ENCODE measurements at regions of chr19 and their contacts with region 1.

Region 1: GRCh38 chr19:51158474-51159129 is 16.5 kb downstream of the SIGLEC7 start:
- DNase-seq: peak; percentile 90
- ATAC-seq: peak; percentile 86
- H3K4me3 Mint-ChIP-seq: no peak overlapping the region
- H3K27ac Mint-ChIP-seq: no peak overlapping the region
- H3K4me1 Mint-ChIP-seq: peaks cover 5% of the 10 kb centered on the region
- H3K27me3 Mint-ChIP-seq: no peaks in the 10 kb centered on the region

Region 2: DNA sequence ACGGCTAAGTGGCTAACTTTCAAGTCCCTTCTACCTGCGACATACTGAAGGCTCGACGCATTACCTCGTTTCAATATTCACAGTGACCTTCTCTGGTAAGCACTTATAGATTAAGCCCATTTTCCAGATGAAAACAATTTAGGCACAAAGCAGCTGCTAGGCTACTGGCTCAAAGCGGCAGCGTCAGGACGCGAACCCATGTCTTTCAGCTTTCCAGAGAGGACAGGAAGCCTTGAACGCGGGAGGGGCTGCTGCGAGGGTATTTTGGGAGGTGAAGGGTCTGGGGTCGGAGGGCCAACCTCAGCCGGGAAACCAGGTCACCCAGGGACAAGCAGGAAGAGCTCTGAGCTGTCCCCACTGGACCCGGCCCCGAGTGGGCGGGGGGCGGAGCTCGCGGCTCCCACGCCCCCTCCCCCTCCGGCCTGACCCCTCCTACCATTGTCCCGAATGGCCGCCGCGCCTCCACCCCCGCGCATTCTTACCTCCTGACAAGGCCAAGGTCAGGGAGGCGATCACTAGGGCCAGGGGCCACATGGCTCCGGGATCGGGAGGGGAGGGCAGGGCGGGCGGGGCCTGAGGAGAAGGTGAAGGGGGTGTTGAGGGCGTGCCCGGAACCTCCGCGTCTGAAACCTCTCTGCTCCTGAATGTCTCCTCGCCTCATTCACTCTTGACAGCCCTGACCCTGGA is 93.9 kb before region 1 on chr19 and contains the start of gene KLK13:
- CTCF ChIA-PET with region 1: no interaction called
- POLR2A ChIA-PET with region 1: no interaction called
- intact Hi-C with region 1: no loop called
- DNase-seq: peak; percentile 10
- ATAC-seq: no peak
- H3K4me3 Mint-ChIP-seq: no peak within 1 kb of the TSS
- H3K27ac Mint-ChIP-seq: no peak within 1 kb of the TSS
- H3K4me1 Mint-ChIP-seq: no peaks in the 10 kb centered on the region
- H3K27me3 Mint-ChIP-seq: peaks cover 40% of the 10 kb centered on the region
- total RNA-seq, gene KLK13: not detected

Region 3: DNA sequence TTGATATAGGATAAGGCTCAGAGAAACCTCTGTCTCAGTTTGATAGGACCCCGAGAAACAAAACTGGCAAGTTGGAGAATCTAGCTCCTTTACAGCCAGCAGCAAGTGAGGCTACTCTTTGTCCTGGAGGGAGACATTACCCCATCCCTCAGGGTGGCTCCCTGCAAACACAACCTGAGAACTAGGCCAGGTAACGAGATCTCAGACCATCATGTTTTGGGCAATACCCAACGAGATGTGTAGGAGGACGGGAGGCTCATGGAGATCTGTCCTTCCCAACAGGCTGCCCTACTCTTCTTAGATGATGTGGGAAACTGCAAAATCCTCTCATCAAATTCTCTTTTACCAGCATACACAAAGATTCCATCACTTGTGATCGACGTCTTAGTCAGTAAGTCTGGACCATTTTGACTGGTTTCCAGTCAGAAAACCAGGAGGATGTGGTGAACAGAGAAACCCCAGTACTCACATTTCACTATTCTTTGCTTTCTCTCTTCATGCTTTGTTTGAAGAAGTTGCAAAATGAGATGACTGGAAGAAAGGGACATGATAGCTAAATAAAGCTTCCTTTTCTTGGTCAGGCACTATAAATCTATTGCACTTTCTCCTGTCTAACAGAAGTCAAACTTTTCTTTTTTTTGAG is 44.4 kb before region 1 on chr19:
- CTCF ChIA-PET with region 1: interaction called, 3 read pairs
- POLR2A ChIA-PET with region 1: no interaction called
- intact Hi-C with region 1: loop called in 1 of 2 experiments (anchors 2 kb)
- DNase-seq: peak; percentile 42
- ATAC-seq: peak; percentile 86
- H3K4me3 Mint-ChIP-seq: no peak overlapping the region
- H3K27ac Mint-ChIP-seq: peak overlapping the region; percentile 90
- H3K4me1 Mint-ChIP-seq: peaks cover 7% of the 10 kb centered on the region
- H3K27me3 Mint-ChIP-seq: no peaks in the 10 kb centered on the region

Region 4: DNA sequence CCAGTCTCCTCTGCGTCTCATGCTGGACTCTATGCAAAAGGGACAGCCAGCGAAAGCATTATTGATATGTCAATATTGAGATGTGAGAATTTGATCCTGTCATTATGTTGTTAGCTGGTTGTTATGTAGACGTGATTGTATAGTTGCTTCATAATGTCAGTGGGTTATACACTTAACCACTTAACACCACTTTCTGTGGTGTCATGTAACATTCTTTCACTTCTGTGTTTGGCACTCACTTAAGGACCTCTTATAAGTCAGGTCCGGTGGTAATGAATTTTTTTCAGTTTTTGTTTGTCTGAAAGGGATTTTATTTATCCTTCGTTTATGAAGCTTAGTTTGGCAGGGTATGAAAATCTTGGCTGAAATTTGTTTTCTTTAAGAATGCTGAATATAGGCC is 23.6 kb before region 1 on chr19:
- CTCF ChIA-PET with region 1: interaction called, 10 read pairs
- POLR2A ChIA-PET with region 1: no interaction called
- intact Hi-C with region 1: no loop called
- DNase-seq: no peak
- ATAC-seq: no peak
- H3K4me3 Mint-ChIP-seq: no peak overlapping the region
- H3K27ac Mint-ChIP-seq: no peak overlapping the region
- H3K4me1 Mint-ChIP-seq: peaks cover 39% of the 10 kb centered on the region
- H3K27me3 Mint-ChIP-seq: no peaks in the 10 kb centered on the region

Region 5: GRCh38 chr19:51147663-51148062 is 10.9 kb before region 1 on chr19:
- CTCF ChIA-PET with region 1: interaction called, 15 read pairs
- POLR2A ChIA-PET with region 1: no interaction called
- intact Hi-C with region 1: no loop called
- DNase-seq: no peak
- ATAC-seq: no peak
- H3K4me3 Mint-ChIP-seq: no peak overlapping the region
- H3K27ac Mint-ChIP-seq: no peak overlapping the region
- H3K4me1 Mint-ChIP-seq: no peaks in the 10 kb centered on the region
- H3K27me3 Mint-ChIP-seq: no peaks in the 10 kb centered on the region

Region 6: GRCh38 chr19:51259348-51260245 is 101.0 kb after region 1 on chr19:
- CTCF ChIA-PET with region 1: interaction called, 43 read pairs
- POLR2A ChIA-PET with region 1: interaction called, 3 read pairs
- intact Hi-C with region 1: loop called (anchors 1 kb)
- DNase-seq: peak; percentile 66
- ATAC-seq: no peak
- H3K4me3 Mint-ChIP-seq: no peak overlapping the region
- H3K27ac Mint-ChIP-seq: no peak overlapping the region
- H3K4me1 Mint-ChIP-seq: peaks cover 5% of the 10 kb centered on the region
- H3K27me3 Mint-ChIP-seq: peaks cover 26% of the 10 kb centered on the region

Region 7: GRCh38 chr19:51327066-51328001 is 168.7 kb after region 1 on chr19:
- CTCF ChIA-PET with region 1: interaction called, 3 read pairs
- POLR2A ChIA-PET with region 1: no interaction called
- intact Hi-C with region 1: loop called in 1 of 2 experiments (anchors 2 kb)
- DNase-seq: peak; percentile 87
- ATAC-seq: peak; percentile 93
- H3K4me3 Mint-ChIP-seq: peak overlapping the region; percentile 35
- H3K27ac Mint-ChIP-seq: no peak overlapping the region
- H3K4me1 Mint-ChIP-seq: peaks cover 8% of the 10 kb centered on the region
- H3K27me3 Mint-ChIP-seq: peaks cover 60% of the 10 kb centered on the region

Measured in activated CD4-positive, alpha-beta T cell treated with anti-CD3 and anti-CD28 coated beads for 36 hours (primary cell).